ENCODE measurements at regions of chr2 and their contacts with region 1.

Region 1: GRCh38 chr2:238203094-238203972 is at the start of gene ILKAP:
- DNase-seq: peak; percentile 95
- ATAC-seq: peak; percentile 98
- H3K4me3 Mint-ChIP-seq: peak within 1 kb of the TSS; percentile 83
- H3K27ac Mint-ChIP-seq: peak within 1 kb of the TSS; percentile 87
- H3K4me1 Mint-ChIP-seq: peaks cover 46% of the 10 kb centered on the region
- H3K27me3 Mint-ChIP-seq: no peaks in the 10 kb centered on the region
- total RNA-seq, gene ILKAP: 39.2 to 44.3 TPM

Region 2: GRCh38 chr2:237674731-237675276 is 528.5 kb before region 1 on chr2:
- CTCF ChIA-PET with region 1: no interaction called
- POLR2A ChIA-PET with region 1: no interaction called
- intact Hi-C with region 1: loop called in 1 of 2 experiments (anchors 5 kb)
- DNase-seq: peak; percentile 86
- ATAC-seq: peak; percentile 61
- H3K4me3 Mint-ChIP-seq: peak overlapping the region; percentile 74
- H3K27ac Mint-ChIP-seq: peak overlapping the region; percentile 90
- H3K4me1 Mint-ChIP-seq: peaks cover 49% of the 10 kb centered on the region
- H3K27me3 Mint-ChIP-seq: no peaks in the 10 kb centered on the region

Region 3: DNA sequence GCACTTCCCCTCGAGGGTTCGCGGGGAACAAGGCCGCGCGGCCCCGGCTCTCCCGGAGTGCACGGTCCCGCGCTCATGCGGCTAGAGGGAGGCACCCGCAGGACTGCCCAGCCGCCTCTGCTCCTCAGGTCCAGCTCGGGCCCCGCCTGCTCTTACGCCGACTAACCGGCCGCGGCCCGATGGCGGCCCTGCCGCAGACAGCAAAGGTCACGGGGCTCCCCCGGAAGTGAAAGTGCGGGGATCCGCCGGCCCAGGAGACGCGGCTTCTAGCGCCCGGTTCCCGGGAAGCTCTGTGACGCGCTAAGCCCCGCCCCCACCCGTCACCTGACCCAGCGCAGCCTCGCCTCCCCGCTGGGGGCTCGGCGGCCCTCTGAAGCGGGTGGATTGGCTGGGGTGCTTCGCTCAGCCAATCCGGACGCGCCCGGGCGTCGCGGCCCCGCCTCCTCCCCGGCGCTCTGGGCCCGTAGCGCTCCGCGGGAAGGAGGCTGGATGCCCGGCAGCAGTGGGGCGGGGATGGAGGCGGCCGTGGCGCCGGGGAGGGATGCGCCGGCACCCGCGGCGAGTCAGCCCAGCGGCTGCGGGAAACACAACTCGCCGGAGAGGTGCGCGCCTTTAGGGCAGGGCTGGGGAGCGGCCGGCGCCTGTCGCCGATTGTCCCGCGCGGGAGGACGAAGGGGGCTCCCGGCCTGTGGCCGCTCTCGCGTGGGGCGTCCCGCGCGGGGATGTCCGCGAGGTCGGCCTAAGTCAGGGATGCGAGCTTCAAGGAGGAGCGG is 142.6 kb before region 1 on chr2 and contains the start of gene SCLY:
- CTCF ChIA-PET with region 1: no interaction called
- POLR2A ChIA-PET with region 1: no interaction called
- intact Hi-C with region 1: loop called in 1 of 2 experiments (anchors 1 kb)
- DNase-seq: peak; percentile 99
- ATAC-seq: peak; percentile 97
- H3K4me3 Mint-ChIP-seq: peak within 1 kb of the TSS; percentile 80
- H3K27ac Mint-ChIP-seq: peak within 1 kb of the TSS; percentile 96
- H3K4me1 Mint-ChIP-seq: peaks cover 49% of the 10 kb centered on the region
- H3K27me3 Mint-ChIP-seq: peaks cover 10% of the 10 kb centered on the region
- total RNA-seq, gene SCLY: 59.2 to 60.5 TPM

Region 4: DNA sequence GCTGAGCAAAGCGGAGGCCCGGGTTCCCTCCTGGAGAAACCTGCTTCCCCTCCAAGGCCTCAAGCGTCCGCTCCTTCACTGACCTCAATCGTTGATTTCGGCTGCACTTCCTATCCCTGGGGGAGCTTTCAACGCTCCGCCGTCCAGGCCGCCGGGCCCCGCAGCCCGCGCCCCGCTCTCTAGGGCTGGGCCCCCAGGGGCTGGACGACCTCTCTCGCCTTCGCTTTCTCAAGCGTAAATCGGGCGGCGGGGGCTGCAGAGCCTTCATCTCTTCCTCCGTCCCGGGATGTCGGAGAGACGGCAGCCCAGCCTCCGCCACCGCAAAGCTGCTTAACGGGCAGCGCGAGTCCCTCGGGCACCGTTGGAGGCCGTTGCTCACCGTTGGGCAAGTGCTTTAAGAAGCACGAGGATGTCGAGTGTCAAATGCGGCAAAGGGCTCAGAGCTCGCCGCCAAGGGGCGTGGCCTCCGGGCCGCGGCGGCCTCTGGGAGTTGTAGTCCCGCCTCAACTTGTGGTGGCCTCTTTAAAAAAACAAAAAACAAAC is 28.0 kb after region 1 on chr2:
- CTCF ChIA-PET with region 1: no interaction called
- POLR2A ChIA-PET with region 1: no interaction called
- intact Hi-C with region 1: loop called (anchors 1 to 2 kb)
- DNase-seq: peak; percentile 89
- ATAC-seq: peak; percentile 90
- H3K4me3 Mint-ChIP-seq: peak overlapping the region; percentile 74
- H3K27ac Mint-ChIP-seq: peak overlapping the region; percentile 62
- H3K4me1 Mint-ChIP-seq: peaks cover 23% of the 10 kb centered on the region
- H3K27me3 Mint-ChIP-seq: peaks cover 14% of the 10 kb centered on the region

Region 5: GRCh38 chr2:238288650-238289573 is 85.6 kb after region 1 on chr2:
- CTCF ChIA-PET with region 1: no interaction called
- POLR2A ChIA-PET with region 1: no interaction called
- intact Hi-C with region 1: loop called in 1 of 2 experiments (anchors 1 kb)
- DNase-seq: peak; percentile 98
- ATAC-seq: peak; percentile 86
- H3K4me3 Mint-ChIP-seq: peak overlapping the region; percentile 74
- H3K27ac Mint-ChIP-seq: peak overlapping the region; percentile 82
- H3K4me1 Mint-ChIP-seq: peaks cover 32% of the 10 kb centered on the region
- H3K27me3 Mint-ChIP-seq: no peaks in the 10 kb centered on the region

Region 6: GRCh38 chr2:238426568-238427434 is 223.5 kb after region 1 on chr2 and contains the start of gene ASB1:
- CTCF ChIA-PET with region 1: no interaction called
- POLR2A ChIA-PET with region 1: no interaction called
- intact Hi-C with region 1: loop called in 1 of 2 experiments (anchors 2 kb)
- DNase-seq: peak; percentile 84
- ATAC-seq: peak; percentile 81
- H3K4me3 Mint-ChIP-seq: peak within 1 kb of the TSS; percentile 91
- H3K27ac Mint-ChIP-seq: peak within 1 kb of the TSS; percentile 96
- H3K4me1 Mint-ChIP-seq: peaks cover 35% of the 10 kb centered on the region
- H3K27me3 Mint-ChIP-seq: no peaks in the 10 kb centered on the region
- total RNA-seq, gene ASB1: 31.7 to 33.4 TPM

Region 7: GRCh38 chr2:238784671-238785527 is 581.6 kb after region 1 on chr2:
- CTCF ChIA-PET with region 1: no interaction called
- POLR2A ChIA-PET with region 1: no interaction called
- intact Hi-C with region 1: no loop called
- DNase-seq: peak; percentile 80
- ATAC-seq: peak; percentile 58
- H3K4me3 Mint-ChIP-seq: no peak overlapping the region
- H3K27ac Mint-ChIP-seq: no peak overlapping the region
- H3K4me1 Mint-ChIP-seq: peaks cover 2% of the 10 kb centered on the region
- H3K27me3 Mint-ChIP-seq: peaks cover 12% of the 10 kb centered on the region

Measured in activated CD4-positive, alpha-beta T cell treated with anti-CD3 and anti-CD28 coated beads for 36 hours (primary cell).